MCF 10A (cell line): ENCODE measurements at regions of chr5 and their contacts with region 1.

Region 1: GRCh38 chr5:172770675-172771438 is at the start of gene DUSP1:
- DNase-seq: peak; percentile 99
- H3K4me3 Mint-ChIP-seq: peak within 1 kb of the TSS; percentile 98
- H3K27ac Mint-ChIP-seq: peak within 1 kb of the TSS; percentile 99
- H3K4me1 Mint-ChIP-seq: peaks cover 50% of the 10 kb centered on the region
- H3K27me3 Mint-ChIP-seq: no peaks in the 10 kb centered on the region
- CTCF ChIP-seq: peak; percentile 30
- total RNA-seq, gene DUSP1: 594 and 611 TPM in 2 replicates

Region 2: DNA sequence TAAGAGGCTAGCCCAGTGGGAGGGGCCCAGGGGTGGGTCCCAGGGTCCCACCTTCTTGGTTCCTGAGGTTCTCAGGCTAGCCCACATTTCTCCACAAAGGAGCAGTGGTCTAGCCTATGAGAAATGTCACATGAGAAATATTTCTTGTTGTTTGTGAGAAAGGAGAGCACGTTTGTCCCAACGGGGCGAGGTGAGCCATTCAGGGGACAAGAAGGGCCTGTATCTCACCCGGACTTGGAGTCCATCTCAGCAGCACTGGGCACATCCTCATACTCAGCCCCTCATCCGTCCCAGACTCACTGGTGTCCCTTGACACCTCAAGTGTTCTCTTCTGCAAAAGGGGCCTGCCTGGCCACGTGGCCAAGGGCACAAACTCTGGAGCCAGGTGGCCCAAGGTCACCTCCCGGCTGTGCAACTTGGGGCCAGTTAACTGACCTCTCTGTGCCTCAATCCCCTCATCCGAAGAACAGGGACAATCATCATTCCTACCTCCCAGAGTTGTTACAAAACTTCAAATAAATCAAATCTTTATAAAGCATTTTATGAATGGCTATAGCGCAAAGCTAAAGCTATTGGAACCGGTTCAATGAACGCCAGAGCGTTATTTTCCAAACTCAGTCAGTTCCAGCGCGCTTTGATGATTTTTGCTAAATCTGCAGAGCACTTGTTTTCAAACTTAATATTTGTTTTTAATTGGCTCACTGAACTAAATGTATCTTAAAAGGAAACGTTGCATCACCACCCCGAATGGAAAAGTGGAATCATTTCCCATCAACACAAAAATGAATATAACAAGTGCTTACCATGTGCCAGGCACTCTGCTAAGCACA is 49.3 kb before region 1 on chr5:
- CTCF ChIA-PET with region 1: interaction called, 16 read pairs
- POLR2A ChIA-PET with region 1: interaction called, 26 read pairs
- intact Hi-C with region 1: loop called (anchors 1 kb)
- DNase-seq: no peak
- H3K4me3 Mint-ChIP-seq: no peak overlapping the region
- H3K27ac Mint-ChIP-seq: no peak overlapping the region
- H3K4me1 Mint-ChIP-seq: peaks cover 16% of the 10 kb centered on the region
- H3K27me3 Mint-ChIP-seq: no peaks in the 10 kb centered on the region
- CTCF ChIP-seq: no peak

Region 3: GRCh38 chr5:172795318-172795977 is 24.6 kb after region 1 on chr5:
- CTCF ChIA-PET with region 1: interaction called, 52 read pairs
- POLR2A ChIA-PET with region 1: interaction called, 1,263 read pairs
- intact Hi-C with region 1: no loop called
- DNase-seq: peak; percentile 96
- H3K4me3 Mint-ChIP-seq: peak overlapping the region; percentile 21
- H3K27ac Mint-ChIP-seq: peak overlapping the region; percentile 79
- H3K4me1 Mint-ChIP-seq: peaks cover 50% of the 10 kb centered on the region
- H3K27me3 Mint-ChIP-seq: no peaks in the 10 kb centered on the region
- CTCF ChIP-seq: no peak

Region 4: DNA sequence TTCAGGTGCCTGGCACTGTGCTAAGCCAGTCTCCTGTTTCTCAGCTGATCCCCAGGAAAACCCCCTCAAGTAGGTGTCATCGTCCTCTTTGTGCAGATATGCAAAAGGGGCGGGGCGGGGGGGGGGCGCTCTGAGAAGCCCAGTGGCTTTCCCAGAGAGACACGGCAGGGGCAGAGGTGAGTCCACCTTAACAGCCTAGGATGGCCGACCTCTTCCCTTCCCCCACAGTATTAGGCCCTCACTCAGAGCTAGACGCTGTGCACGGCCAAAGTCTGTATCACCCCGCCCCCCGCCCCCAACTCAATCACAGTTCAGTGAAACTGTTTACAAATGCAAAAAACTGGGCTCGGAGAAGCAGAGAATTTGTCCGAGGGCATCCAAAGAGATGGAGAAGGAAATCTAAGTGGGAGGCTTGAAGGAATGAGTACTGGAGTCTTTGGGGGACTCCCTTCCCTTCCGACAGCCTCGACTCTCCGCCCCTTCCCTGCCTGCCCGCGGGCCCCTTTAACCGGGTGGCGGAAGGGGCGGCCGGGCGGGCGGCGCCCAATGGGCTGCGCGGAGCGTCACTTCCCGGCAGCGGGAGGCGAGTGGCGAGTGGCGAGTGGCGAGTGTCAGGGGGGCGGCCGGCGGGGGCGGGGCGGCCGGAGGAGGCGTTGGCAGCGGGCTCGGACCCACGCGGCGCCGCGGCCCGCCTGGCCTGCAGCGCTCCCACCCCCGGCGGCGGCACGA is 63.0 kb after region 1 on chr5 and contains the start of gene ERGIC1:
- CTCF ChIA-PET with region 1: interaction called, 10 read pairs
- POLR2A ChIA-PET with region 1: interaction called, 112 read pairs
- intact Hi-C with region 1: loop called (anchors 1 kb)
- DNase-seq: peak; percentile 91
- H3K4me3 Mint-ChIP-seq: peak within 1 kb of the TSS; percentile 87
- H3K27ac Mint-ChIP-seq: peak within 1 kb of the TSS; percentile 88
- H3K4me1 Mint-ChIP-seq: peaks cover 40% of the 10 kb centered on the region
- H3K27me3 Mint-ChIP-seq: no peaks in the 10 kb centered on the region
- CTCF ChIP-seq: peak; percentile 26
- total RNA-seq, gene ERGIC1: 257 and 292 TPM in 2 replicates

Region 5: DNA sequence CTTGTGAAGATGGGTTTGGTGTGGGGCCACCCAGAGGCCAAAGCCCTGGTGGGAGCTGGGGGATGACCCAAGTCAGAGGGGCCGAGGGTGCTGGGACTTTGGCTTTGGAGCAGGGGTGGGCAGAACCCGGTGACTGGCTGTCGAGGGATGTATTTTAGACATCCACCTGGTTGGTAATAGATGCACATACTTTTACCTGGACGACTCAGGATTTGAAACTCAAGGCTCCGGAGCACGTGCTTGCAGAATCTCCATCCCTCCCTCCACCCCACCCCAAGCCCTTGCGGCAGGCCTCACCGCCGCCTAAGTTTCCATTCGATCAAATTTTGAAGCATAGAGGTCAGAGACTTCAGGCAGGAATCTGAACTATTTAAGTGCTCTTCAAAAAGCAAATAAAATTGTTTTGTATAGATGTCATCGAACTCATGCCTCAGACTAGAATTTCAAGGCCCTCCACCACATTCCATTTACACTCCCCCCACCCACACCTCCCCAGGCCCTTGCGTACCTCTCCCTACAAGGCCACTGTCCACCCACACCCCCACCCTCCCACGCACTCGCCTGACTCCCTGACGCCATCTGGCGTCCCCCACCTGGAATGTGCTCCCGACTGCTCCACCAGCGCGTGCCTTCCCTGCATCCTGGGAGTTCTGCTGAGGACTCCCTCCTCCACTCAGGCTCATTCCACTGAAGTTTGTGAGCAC is 131.8 kb after region 1 on chr5:
- CTCF ChIA-PET with region 1: interaction called, 35 read pairs
- POLR2A ChIA-PET with region 1: interaction called, 910 read pairs
- intact Hi-C with region 1: loop called (anchors 1 kb)
- DNase-seq: peak; percentile 75
- H3K4me3 Mint-ChIP-seq: peak overlapping the region; percentile 45
- H3K27ac Mint-ChIP-seq: peak overlapping the region; percentile 98
- H3K4me1 Mint-ChIP-seq: peaks cover 82% of the 10 kb centered on the region
- H3K27me3 Mint-ChIP-seq: no peaks in the 10 kb centered on the region
- CTCF ChIP-seq: peak; percentile 27

Region 6: DNA sequence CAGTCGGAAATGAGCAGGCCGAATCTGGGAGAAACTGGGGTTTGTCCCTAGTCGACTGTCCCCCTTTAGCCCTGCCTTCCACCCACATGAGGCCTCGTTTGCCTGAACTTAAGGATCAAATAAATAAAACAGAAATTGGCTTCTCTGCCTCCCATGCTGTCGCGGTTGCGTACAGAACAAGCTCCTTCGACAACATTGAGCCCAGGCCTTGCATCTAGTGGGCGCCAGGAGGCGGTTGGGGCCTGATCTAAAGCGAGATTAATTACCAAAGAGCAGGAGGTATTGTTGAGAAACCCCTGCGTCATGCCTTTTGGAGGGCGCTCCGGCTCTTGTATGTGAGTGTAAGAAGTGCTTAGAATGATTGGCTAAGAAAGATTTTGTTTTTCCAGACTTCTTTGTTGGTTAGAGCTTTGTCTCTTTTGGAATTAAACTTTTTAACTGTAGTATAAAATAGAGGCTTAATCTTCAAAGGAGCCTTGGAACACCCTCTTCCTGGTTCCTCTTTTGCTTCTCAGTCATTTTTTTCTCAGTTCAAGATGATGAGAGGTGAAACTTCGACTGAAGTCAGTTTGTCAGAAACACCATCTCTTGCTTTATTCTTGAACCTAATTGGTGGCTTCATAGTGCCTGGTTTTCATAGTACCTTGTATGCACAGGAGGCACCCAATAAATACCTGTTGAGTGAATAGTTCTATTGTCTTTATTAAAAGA is 213.5 kb after region 1 on chr5:
- CTCF ChIA-PET with region 1: interaction called, 3 read pairs
- POLR2A ChIA-PET with region 1: interaction called, 17 read pairs
- intact Hi-C with region 1: no loop called
- DNase-seq: peak; percentile 96
- H3K4me3 Mint-ChIP-seq: peak overlapping the region; percentile 94
- H3K27ac Mint-ChIP-seq: peak overlapping the region; percentile 91
- H3K4me1 Mint-ChIP-seq: peaks cover 6% of the 10 kb centered on the region
- H3K27me3 Mint-ChIP-seq: no peaks in the 10 kb centered on the region
- CTCF ChIP-seq: peak; percentile 43